ENCODE measurements at regions of chr12 and their contacts with region 1.

Region 1: GRCh38 chr12:67515679-67516340 is 132.7 kb upstream of the DYRK2 start:
- DNase-seq: peak in 8 of 10 donors; percentile 5 to 65 (median 31)
- ATAC-seq: peak; percentile 88 to 92
- H3K4me3 Mint-ChIP-seq: peak overlapping the region; percentile 8 to 81 (median 69)
- H3K27ac Mint-ChIP-seq: peak overlapping the region; percentile 70 to 92 (median 84)
- H3K4me1 Mint-ChIP-seq: peaks cover 32 to 60% (median 52%) of the 10 kb centered on the region in 4 donors
- H3K27me3 Mint-ChIP-seq: no peaks in the 10 kb centered on the region

Region 2: DNA sequence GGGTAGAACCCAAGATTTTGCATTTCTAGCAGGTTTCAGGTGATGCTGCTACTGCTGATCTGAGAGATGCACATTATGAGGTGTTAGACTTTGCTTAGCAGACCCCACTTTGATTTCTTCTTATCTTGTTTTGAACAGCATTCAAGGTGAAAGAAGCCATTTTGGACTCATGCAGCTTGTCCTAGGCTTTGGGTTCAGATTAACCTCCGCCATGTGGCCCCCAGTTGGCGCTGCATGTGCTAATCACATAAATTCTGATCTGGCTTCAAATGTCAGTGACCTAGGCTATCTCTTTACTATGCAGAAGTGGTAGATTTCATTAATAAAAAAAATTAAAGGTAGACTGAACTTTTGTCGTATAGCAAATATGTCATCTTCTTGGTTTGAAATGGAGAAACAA is 43.0 kb after region 1 on chr12:
- POLR2A ChIA-PET with region 1: interaction called, 10 read pairs
- DNase-seq: no peak
- ATAC-seq: no peak
- H3K4me3 Mint-ChIP-seq: no peak overlapping the region
- H3K27ac Mint-ChIP-seq: no peak overlapping the region
- H3K4me1 Mint-ChIP-seq: peaks cover 0 to 18% (median 8%) of the 10 kb centered on the region in 4 donors
- H3K27me3 Mint-ChIP-seq: no peaks in the 10 kb centered on the region

Region 3: DNA sequence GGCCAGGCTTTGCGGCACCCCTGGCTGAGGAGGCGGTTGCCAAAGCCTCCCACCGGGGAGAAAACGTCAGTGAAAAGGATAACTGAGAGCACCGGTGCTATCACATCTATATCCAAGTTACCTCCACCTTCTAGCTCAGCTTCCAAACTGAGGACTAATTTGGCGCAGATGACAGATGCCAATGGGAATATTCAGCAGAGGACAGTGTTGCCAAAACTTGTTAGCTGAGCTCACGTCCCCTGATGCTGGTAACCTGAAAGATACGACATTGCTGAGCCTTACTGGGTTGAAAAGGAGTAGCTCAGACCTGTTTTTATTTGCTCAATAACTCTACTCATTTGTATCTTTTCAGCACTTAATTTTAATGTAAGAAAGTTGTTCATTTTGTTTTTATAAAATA is 142.7 kb after region 1 on chr12:
- POLR2A ChIA-PET with region 1: no interaction called
- DNase-seq: no peak
- ATAC-seq: no peak
- H3K4me3 Mint-ChIP-seq: peak overlapping the region in 5 of 10 donors; percentile 3 to 75 (median 50)
- H3K27ac Mint-ChIP-seq: peak overlapping the region in 3 of 10 donors; percentile 37 to 61 (median 45)
- H3K4me1 Mint-ChIP-seq: peaks cover 64 to 98% (median 95%) of the 10 kb centered on the region in 4 donors
- H3K27me3 Mint-ChIP-seq: no peaks in the 10 kb centered on the region